Activated CD8-positive, alpha-beta T cell treated with anti-CD3 and anti-CD28 coated beads, Interleukin-2, amount 10 ng/mL, durations not matched to agents 7 days and 5 days (primary cell): ENCODE measurements at regions of chr18 and their contacts with region 1.

Region 1: DNA sequence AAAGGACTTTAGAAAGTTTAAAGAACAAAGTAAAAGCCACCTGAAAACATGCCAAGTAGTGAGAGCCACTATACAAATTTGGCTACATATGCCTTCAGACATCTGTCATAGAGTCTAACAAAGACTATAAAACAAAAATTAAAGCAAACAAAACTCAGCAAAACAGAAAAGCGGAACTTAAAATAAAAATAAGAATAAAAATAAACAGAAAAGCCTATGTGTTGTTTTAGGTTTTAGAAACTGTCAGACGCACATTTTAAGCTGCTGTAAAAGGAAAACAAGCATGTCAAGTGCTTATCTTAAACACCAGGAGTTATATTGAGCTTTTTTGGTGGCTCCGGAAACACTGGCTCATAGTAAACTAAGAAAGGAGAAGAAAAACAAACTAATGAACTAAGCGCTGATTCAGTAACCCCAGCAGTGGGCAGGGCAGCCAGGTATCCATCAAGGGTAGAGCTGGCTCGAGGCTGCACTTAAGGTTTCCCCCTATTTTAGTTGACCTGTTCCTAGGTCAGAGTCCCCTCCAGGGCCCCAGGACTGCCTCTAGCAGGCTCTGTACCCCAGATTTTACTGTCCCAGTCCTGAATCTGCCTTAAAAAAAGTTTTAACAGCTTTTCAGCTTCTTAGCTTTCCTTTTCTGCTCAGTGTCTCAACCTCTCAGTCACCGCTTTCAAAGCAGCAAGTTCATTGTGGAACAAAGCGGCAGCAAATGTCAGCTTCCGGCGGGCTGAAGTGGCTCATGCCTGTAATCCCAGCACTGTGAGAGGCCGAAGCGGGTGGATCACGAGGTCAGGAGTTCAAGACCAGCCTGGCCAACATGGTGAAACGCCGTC is 15.4 kb upstream of the RMC1 start:
- DNase-seq: peak; percentile 70
- ATAC-seq: peak; percentile 82
- H3K4me3 Mint-ChIP-seq: peak overlapping the region; percentile 47
- H3K27ac Mint-ChIP-seq: peak overlapping the region; percentile 89
- H3K4me1 Mint-ChIP-seq: peaks cover 19% of the 10 kb centered on the region
- H3K27me3 Mint-ChIP-seq: no peaks in the 10 kb centered on the region

Region 2: DNA sequence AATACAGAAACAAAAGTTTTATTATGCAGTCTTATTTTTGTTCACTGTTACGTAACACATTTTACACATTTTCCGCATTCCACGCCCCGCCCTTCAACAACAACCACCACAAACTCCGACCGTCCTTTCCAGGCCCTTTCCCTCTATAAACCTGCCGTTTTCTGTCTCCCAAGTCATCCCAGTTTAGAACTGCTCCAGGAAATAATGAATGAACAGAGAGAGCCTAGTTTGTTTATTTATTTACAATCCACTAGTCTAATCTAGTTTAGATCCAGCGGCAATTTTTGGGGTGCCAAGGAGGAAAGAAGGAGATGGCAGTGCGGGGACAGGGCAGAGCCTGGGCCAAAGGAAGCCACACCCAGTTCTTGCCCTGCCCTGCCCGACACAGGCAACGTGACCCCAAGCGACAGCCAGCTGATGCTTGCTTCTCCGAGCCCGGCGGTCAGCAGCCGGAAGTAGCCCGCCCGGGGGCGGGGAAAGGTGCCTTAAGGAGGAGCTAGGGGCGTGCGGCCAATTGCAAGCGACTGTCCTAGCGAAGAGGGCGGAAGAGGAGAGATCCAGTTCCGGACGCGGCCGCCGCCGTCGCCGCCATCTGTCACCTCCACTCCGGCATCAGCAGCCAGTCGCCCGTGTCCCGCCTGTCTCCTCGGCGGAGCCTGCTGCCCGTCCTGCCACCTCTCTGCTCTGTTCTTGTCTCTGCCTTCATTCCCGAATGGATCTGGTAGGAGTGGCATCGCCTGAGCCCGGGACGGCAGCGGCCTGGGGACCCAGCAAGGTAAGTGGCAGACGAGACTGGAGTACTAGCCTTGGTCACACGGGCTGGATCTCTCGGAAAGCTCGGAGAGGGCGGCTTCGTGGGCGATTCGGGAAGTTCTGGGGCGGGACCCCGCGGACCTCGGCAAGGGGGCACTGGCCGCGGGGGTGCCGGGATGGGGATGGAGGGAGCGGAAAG is 35.0 kb before region 1 on chr18 and contains the start of gene RIOK3:
- CTCF ChIA-PET with region 1: no interaction called
- POLR2A ChIA-PET with region 1: interaction called, 12 read pairs
- DNase-seq: peak; percentile 95
- ATAC-seq: peak; percentile 98
- H3K4me3 Mint-ChIP-seq: peak within 1 kb of the TSS; percentile 99
- H3K27ac Mint-ChIP-seq: peak within 1 kb of the TSS; percentile 82
- H3K4me1 Mint-ChIP-seq: peaks cover 37% of the 10 kb centered on the region
- H3K27me3 Mint-ChIP-seq: no peaks in the 10 kb centered on the region
- total RNA-seq, gene RIOK3: 53.6 to 69.3 TPM

Region 3: DNA sequence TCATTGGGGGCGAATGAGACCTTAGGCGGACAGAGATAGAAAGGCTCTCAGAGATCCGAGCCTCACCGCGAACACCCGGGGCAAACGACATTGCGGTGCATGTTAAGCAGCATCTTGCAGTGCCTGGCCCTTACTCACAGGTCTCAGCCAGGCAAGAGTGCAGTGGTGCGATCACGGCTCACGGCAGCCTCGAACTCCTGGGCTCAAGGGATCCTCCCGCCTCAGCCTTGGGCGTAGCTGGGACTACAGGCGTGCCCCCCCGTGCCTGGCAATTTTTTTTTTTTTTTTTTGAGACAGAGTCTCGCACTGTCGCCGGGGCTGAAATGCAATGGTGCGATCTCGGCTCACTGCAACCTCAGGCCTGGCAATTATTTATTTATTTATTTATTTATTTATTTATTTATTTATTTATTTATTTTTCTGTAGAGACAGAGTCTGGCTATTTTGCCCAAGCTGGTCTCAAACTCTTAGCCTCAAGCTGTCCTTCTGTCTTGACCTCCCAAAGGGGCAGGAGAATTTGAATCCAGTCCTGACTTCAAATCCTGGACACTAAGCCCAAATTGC is 202.6 kb after region 1 on chr18:
- CTCF ChIA-PET with region 1: no interaction called
- POLR2A ChIA-PET with region 1: no interaction called
- DNase-seq: no peak
- ATAC-seq: no peak
- H3K4me3 Mint-ChIP-seq: no peak overlapping the region
- H3K27ac Mint-ChIP-seq: no peak overlapping the region
- H3K4me1 Mint-ChIP-seq: peaks cover 7% of the 10 kb centered on the region
- H3K27me3 Mint-ChIP-seq: peaks cover 44% of the 10 kb centered on the region

Region 4: GRCh38 chr18:23793978-23794867 is 306.3 kb after region 1 on chr18:
- CTCF ChIA-PET with region 1: no interaction called
- POLR2A ChIA-PET with region 1: no interaction called
- DNase-seq: no peak
- ATAC-seq: no peak
- H3K4me3 Mint-ChIP-seq: no peak overlapping the region
- H3K27ac Mint-ChIP-seq: no peak overlapping the region
- H3K4me1 Mint-ChIP-seq: peaks cover 2% of the 10 kb centered on the region
- H3K27me3 Mint-ChIP-seq: peaks cover 18% of the 10 kb centered on the region